Activated B cell treated with CpG ODN at 0.5 μM for 24 hours (primary cell): ENCODE measurements at regions of chr2 and their contacts with region 1.

Region 1: GRCh38 chr2:135052042-135052876 is at the start of gene RAB3GAP1:
- DNase-seq: peak; percentile 72
- ATAC-seq: peak; percentile 89
- H3K4me3 Mint-ChIP-seq: peak within 1 kb of the TSS; percentile 99
- H3K27ac Mint-ChIP-seq: peak within 1 kb of the TSS; percentile 99
- H3K4me1 Mint-ChIP-seq: peaks cover 40% of the 10 kb centered on the region
- H3K27me3 Mint-ChIP-seq: no peaks in the 10 kb centered on the region
- CTCF ChIP-seq: no peak
- total RNA-seq, gene RAB3GAP1: 46.3 and 51.0 TPM in 2 replicates

Region 2: DNA sequence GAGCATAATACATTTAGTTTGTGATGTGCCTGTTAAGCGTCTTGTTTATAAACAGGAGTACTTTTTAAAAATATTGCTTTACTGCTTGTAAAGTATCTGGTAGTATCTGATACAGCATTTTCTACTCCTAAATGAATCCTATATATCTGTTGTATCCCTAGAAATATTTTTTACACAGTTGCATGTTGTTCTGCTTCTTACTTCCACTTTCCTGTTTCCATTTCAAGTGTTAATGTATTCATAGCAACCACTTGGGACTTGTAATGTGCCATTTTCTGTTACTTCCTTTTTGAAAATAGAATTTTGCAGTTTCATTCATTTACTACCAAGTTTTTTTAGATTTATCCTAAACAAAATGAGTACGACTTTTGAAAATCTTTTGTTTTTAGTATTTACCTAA is 108.7 kb before region 1 on chr2:
- CTCF ChIA-PET with region 1: no interaction called
- POLR2A ChIA-PET with region 1: no interaction called
- intact Hi-C with region 1: loop called (anchors 1 kb)
- DNase-seq: no peak
- ATAC-seq: peak; percentile 57
- H3K4me3 Mint-ChIP-seq: peak overlapping the region; percentile 11
- H3K27ac Mint-ChIP-seq: peak overlapping the region; percentile 75
- H3K4me1 Mint-ChIP-seq: peaks cover 32% of the 10 kb centered on the region
- H3K27me3 Mint-ChIP-seq: no peaks in the 10 kb centered on the region
- CTCF ChIP-seq: no peak

Region 3: DNA sequence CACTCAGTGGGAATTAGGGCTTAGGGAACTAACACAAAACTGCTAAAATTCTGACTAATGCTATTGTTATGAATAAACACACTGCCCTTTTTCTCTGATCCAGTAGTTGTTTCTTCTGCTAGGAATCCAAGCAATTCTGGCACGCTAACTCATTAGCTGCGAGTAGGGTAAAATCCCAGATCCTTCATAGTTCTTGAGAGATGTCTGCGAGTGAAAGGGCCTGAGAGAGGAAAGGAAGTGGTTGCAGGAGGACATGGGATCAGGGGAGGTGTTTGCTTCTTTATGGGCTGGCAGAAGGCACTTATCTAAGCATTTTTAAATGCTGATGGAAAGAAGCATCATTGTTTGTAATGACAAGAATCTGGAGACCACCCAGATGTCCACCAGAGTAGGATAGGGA is 14.4 kb before region 1 on chr2:
- CTCF ChIA-PET with region 1: no interaction called
- POLR2A ChIA-PET with region 1: no interaction called
- intact Hi-C with region 1: no loop called
- DNase-seq: no peak
- ATAC-seq: no peak
- H3K4me3 Mint-ChIP-seq: no peak overlapping the region
- H3K27ac Mint-ChIP-seq: no peak overlapping the region
- H3K4me1 Mint-ChIP-seq: no peaks in the 10 kb centered on the region
- H3K27me3 Mint-ChIP-seq: peaks cover 2% of the 10 kb centered on the region
- CTCF ChIP-seq: no peak

Region 4: GRCh38 chr2:135099802-135100483 is 47.7 kb after region 1 on chr2:
- CTCF ChIA-PET with region 1: no interaction called
- POLR2A ChIA-PET with region 1: no interaction called
- intact Hi-C with region 1: loop called (anchors 5 kb)
- DNase-seq: no peak
- ATAC-seq: no peak
- H3K4me3 Mint-ChIP-seq: no peak overlapping the region
- H3K27ac Mint-ChIP-seq: no peak overlapping the region
- H3K4me1 Mint-ChIP-seq: no peaks in the 10 kb centered on the region
- H3K27me3 Mint-ChIP-seq: no peaks in the 10 kb centered on the region
- CTCF ChIP-seq: no peak

Region 5: GRCh38 chr2:135741395-135742324 is 689.4 kb after region 1 on chr2 and contains the start of gene UBXN4:
- CTCF ChIA-PET with region 1: no interaction called
- POLR2A ChIA-PET with region 1: interaction called, 3 read pairs
- intact Hi-C with region 1: loop called (anchors 1 kb)
- DNase-seq: peak; percentile 81
- ATAC-seq: peak; percentile 87
- H3K4me3 Mint-ChIP-seq: peak within 1 kb of the TSS; percentile 99
- H3K27ac Mint-ChIP-seq: peak within 1 kb of the TSS; percentile 99
- H3K4me1 Mint-ChIP-seq: peaks cover 40% of the 10 kb centered on the region
- H3K27me3 Mint-ChIP-seq: no peaks in the 10 kb centered on the region
- CTCF ChIP-seq: no peak
- total RNA-seq, gene UBXN4: 87.8 and 107 TPM in 2 replicates

Region 6: GRCh38 chr2:135876066-135876711 is 823.9 kb after region 1 on chr2 and contains the start of gene MCM6:
- CTCF ChIA-PET with region 1: no interaction called
- POLR2A ChIA-PET with region 1: interaction called, 3 read pairs
- intact Hi-C with region 1: loop called (anchors 1 kb)
- DNase-seq: peak; percentile 87
- ATAC-seq: peak; percentile 90
- H3K4me3 Mint-ChIP-seq: peak within 1 kb of the TSS; percentile 95
- H3K27ac Mint-ChIP-seq: peak within 1 kb of the TSS; percentile 90
- H3K4me1 Mint-ChIP-seq: peaks cover 24% of the 10 kb centered on the region
- H3K27me3 Mint-ChIP-seq: no peaks in the 10 kb centered on the region
- CTCF ChIP-seq: no peak
- total RNA-seq, gene MCM6: 27.9 and 28.9 TPM in 2 replicates

Region 7: GRCh38 chr2:136394136-136395060 is 1342.1 kb after region 1 on chr2:
- CTCF ChIA-PET with region 1: no interaction called
- POLR2A ChIA-PET with region 1: no interaction called
- intact Hi-C with region 1: loop called (anchors 10 kb)
- DNase-seq: no peak
- ATAC-seq: peak; percentile 41
- H3K4me3 Mint-ChIP-seq: peak overlapping the region; percentile 11
- H3K27ac Mint-ChIP-seq: peak overlapping the region; percentile 69
- H3K4me1 Mint-ChIP-seq: peaks cover 63% of the 10 kb centered on the region
- H3K27me3 Mint-ChIP-seq: no peaks in the 10 kb centered on the region
- CTCF ChIP-seq: no peak